Activated CD4-positive, alpha-beta T cell treated with anti-CD3 and anti-CD28 coated beads for 36 hours (primary cell): ENCODE measurements at regions of chr15 and their contacts with region 1.

Region 1: GRCh38 chr15:98177924-98178592 is 217.6 kb downstream of the ARRDC4 start:
- DNase-seq: peak; percentile 51
- ATAC-seq: peak; percentile 74
- H3K4me3 Mint-ChIP-seq: no peak overlapping the region
- H3K27ac Mint-ChIP-seq: no peak overlapping the region
- H3K4me1 Mint-ChIP-seq: peaks cover 7% of the 10 kb centered on the region
- H3K27me3 Mint-ChIP-seq: peaks cover 12% of the 10 kb centered on the region

Region 2: DNA sequence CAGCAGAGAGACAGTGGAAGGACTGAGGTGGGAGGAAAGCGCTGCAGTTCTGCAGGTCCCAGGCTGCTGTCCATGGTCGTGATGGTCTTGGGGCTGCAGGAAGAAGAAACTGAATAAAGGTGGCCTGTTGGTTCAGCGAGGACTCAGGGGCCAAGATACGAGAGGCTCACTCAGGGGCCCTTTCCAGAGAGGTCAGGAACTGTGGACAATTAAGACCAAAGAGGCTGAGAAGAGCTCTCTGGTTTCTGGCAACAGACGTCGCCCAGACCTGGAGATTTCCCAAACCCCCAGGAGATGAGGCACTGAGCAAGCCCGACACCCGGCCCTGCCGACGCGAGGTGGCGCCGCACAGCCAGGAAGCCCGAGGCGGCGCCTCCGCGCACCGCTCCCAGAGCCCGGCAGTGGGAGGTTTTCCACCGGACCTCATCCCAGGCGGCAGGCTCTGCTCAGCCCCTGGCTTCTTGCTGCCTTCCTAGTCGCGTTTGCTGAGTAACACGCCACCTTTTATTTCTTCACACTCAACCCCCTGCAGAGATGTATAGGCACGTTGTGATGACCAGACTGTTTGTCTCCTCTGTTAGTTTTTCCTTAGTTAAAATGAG is 274.0 kb before region 1 on chr15:
- CTCF ChIA-PET with region 1: interaction called, 21 read pairs
- POLR2A ChIA-PET with region 1: no interaction called
- intact Hi-C with region 1: loop called (anchors 1 kb)
- DNase-seq: peak; percentile 64
- ATAC-seq: peak; percentile 65
- H3K4me3 Mint-ChIP-seq: no peak overlapping the region
- H3K27ac Mint-ChIP-seq: no peak overlapping the region
- H3K4me1 Mint-ChIP-seq: peaks cover 2% of the 10 kb centered on the region
- H3K27me3 Mint-ChIP-seq: peaks cover 28% of the 10 kb centered on the region

Region 3: DNA sequence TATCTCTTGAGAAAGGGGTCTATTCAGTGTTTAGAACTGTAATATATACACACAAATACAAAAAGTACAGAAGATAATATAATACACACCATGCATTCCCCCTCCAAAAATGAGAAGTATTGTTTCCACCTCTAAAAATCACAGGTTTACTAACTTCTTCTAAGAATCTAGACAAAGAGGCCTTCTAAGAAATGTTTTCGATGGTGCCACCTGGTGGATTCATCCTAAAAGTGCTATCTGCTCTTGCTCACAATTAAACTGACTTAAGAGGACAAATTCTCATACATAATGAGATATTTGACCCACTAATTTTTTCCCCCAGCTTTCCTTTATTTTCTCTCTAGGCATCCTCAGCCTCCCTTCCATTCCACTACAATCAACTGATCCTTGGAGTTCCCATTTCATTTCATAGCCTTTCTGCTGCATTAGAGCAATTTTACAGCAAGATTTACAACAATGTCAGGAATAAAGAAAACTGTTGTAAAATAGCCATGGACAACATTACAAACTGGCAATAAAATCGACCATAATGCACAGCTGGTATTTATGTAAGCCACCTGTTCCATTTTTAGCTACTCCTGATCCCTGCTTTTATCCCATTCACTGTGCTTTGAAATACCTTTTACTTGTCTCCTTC is 92.9 kb before region 1 on chr15:
- CTCF ChIA-PET with region 1: interaction called, 7 read pairs
- POLR2A ChIA-PET with region 1: no interaction called
- intact Hi-C with region 1: loop called in 1 of 2 experiments (anchors 5 kb)
- DNase-seq: peak; percentile 50
- ATAC-seq: no peak
- H3K4me3 Mint-ChIP-seq: no peak overlapping the region
- H3K27ac Mint-ChIP-seq: no peak overlapping the region
- H3K4me1 Mint-ChIP-seq: no peaks in the 10 kb centered on the region
- H3K27me3 Mint-ChIP-seq: no peaks in the 10 kb centered on the region

Region 4: DNA sequence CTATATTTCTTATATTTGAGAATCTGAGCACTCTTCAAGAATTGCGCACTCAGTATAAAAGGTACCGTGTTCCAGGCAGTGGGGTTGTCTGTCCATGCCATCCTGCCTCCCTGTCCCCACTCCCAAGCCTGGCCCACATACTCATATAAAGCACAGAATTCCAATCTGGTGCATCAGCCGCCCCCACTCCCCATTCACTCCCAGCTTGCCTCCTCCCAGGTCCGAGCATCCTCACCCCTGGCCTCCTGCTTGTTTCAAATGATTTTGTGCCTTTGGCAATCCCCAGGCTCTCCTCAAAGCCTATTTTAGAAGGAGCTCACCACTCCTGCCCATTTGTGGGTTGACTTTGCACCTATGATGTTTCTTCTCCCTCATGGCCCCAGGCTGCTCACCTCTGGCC is 448.1 kb after region 1 on chr15:
- CTCF ChIA-PET with region 1: no interaction called
- POLR2A ChIA-PET with region 1: no interaction called
- intact Hi-C with region 1: no loop called
- DNase-seq: no peak
- ATAC-seq: no peak
- H3K4me3 Mint-ChIP-seq: no peak overlapping the region
- H3K27ac Mint-ChIP-seq: no peak overlapping the region
- H3K4me1 Mint-ChIP-seq: no peaks in the 10 kb centered on the region
- H3K27me3 Mint-ChIP-seq: no peaks in the 10 kb centered on the region